HepG2 (cell line): ENCODE measurements at regions of chr2 and their contacts with region 1.

Region 1: GRCh38 chr2:190432567-190433231 is 24.5 kb downstream of the MFSD6 start:
- DNase-seq: no peak
- ATAC-seq: no peak
- H3K4me3 ChIP-seq: no peak overlapping the region
- H3K27ac ChIP-seq: no peak overlapping the region
- H3K4me1 ChIP-seq: 0 out of 2 replicates have a peak, but pooled peaks cover 5% of the 10 kb centered on the region
- H3K27me3 ChIP-seq: no peaks in the 10 kb centered on the region; a peak in 1 of 5 replicates
- CTCF ChIP-seq: no peak
- EP300 ChIP-seq: no peak
- POLR2A ChIP-seq: no peak
- RAD21 ChIP-seq: no peak

Region 2: DNA sequence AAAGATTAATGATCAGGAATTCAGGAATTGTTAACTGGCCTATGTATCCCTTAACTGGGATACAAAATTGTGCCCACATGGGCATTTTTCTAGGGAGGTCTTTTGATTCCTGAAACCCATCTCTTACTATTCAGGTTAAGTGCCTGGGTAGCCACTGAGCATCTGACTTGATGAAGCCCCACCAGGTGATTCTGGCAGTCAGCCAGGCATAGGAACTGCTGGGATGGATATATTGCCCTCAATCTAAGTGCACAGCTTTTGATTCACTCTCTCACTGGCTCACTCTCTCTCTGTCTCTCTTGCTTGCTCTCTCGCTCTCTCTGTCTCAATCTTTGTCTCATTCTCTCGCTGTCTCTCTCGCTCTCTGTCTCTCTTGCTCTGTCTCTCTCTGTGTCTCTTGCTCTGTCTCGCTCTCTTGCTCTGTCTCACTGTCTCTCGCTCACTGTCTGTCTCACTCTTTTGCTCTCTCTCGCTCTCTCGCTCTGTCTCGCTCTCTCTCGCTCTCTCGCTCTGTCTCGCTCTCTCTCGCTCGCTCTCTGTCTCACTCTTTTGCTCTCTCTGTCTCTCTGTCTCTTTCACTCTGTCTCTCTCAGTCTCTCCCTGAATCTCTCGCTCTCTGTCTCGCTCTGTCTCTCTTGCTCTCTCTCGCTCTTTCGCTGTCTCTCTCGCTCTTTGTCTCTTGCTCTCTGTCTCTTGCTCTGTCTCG is 67.0 kb before region 1 on chr2:
- CTCF ChIA-PET with region 1: no interaction called
- POLR2A ChIA-PET with region 1: no interaction called
- in situ Hi-C with region 1: no loop called
- intact Hi-C with region 1: no loop called
- DNase-seq: no peak
- ATAC-seq: no peak
- H3K4me3 ChIP-seq: no peak overlapping the region
- H3K27ac ChIP-seq: no peak overlapping the region
- H3K4me1 ChIP-seq: no peaks in the 10 kb centered on the region
- H3K27me3 ChIP-seq: no peaks in the 10 kb centered on the region
- CTCF ChIP-seq: no peak
- EP300 ChIP-seq: no peak
- POLR2A ChIP-seq: no peak
- RAD21 ChIP-seq: no peak

Region 3: GRCh38 chr2:190468814-190469569 is 36.3 kb after region 1 on chr2:
- CTCF ChIA-PET with region 1: no interaction called
- POLR2A ChIA-PET with region 1: no interaction called
- in situ Hi-C with region 1: no loop called
- intact Hi-C with region 1: no loop called
- DNase-seq: peak; percentile 40
- ATAC-seq: no peak
- H3K4me3 ChIP-seq: no peak overlapping the region
- H3K27ac ChIP-seq: no peak overlapping the region
- H3K4me1 ChIP-seq: peaks cover 26% of the 10 kb centered on the region
- H3K27me3 ChIP-seq: no peaks in the 10 kb centered on the region
- CTCF ChIP-seq: no peak
- EP300 ChIP-seq: no peak
- POLR2A ChIP-seq: no peak
- RAD21 ChIP-seq: no peak

Region 4: DNA sequence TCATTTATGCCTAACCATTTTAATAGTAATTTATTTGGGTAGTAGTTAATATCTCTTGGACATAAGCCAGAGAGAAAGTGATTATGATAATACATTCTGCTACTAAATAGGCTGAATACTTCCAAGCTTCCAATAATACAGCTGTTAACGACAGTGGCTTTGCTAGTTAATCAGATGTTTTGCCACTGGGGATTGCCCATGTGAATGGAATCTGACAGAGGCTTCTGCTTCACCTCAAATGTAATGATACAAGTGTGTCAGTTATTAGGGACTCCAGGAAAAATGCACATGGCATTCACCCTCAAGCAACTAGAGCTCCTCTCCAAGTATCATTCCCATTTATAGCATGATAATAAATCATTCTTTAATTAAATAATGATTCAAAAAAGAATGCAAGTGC is 1947.0 kb after region 1 on chr2:
- CTCF ChIA-PET with region 1: no interaction called
- POLR2A ChIA-PET with region 1: no interaction called
- in situ Hi-C with region 1: no loop called
- intact Hi-C with region 1: loop called (anchors 10 kb)
- DNase-seq: no peak
- ATAC-seq: no peak
- H3K4me3 ChIP-seq: no peak overlapping the region
- H3K27ac ChIP-seq: no peak overlapping the region
- H3K4me1 ChIP-seq: no peaks in the 10 kb centered on the region
- H3K27me3 ChIP-seq: no peaks in the 10 kb centered on the region
- CTCF ChIP-seq: no peak
- EP300 ChIP-seq: no peak
- POLR2A ChIP-seq: no peak
- RAD21 ChIP-seq: no peak